ENCODE measurements at regions of chr1 and their contacts with region 1.

Region 1: DNA sequence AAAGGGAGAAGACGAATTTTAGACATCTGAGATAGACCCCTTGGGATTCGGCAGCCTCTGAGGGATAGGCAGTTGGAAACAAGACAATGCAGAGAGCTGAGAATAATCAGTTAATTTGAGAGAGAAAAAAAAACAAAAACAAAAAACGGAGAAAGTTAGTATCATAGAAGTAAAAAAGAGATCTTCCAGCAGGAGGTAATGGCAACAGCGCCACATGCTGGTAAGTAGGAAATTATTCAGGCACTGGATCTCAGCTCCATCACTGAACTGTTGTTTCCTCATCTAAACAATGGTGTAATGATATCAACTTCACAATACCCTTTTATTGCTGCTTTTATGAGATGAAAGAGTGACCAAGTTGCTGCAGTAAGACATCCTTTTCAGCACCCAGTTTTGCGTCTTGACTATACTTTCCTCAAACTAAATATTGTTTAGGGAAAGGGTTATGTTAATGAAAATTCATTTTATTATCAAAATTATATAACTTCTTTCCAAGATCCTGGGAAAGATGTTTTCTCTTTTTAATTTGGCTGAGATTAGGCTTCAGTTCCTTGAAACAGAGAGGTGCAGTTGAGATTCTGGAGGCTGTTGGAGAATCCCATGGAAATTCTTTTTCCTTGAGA is 91.4 kb upstream of the KCNA3 start:
- DNase-seq: peak; percentile 11 to 86 (median 55)
- ATAC-seq: peak; percentile 87
- H3K4me3 ChIP-seq: no peak overlapping the region
- H3K4me3 Mint-ChIP-seq: no peak overlapping the region
- H3K27ac ChIP-seq: no peak overlapping the region
- H3K27ac Mint-ChIP-seq: no peak overlapping the region
- H3K4me1 ChIP-seq: no peaks in the 10 kb centered on the region
- H3K4me1 Mint-ChIP-seq: peaks cover 2% of the 10 kb centered on the region
- H3K27me3 ChIP-seq: no peaks in the 10 kb centered on the region
- H3K27me3 Mint-ChIP-seq: peaks cover 10% of the 10 kb centered on the region
- CTCF ChIP-seq: peak; percentile 95

Region 2: GRCh38 chr1:110554871-110555801 is 211.0 kb before region 1 on chr1:
- CTCF ChIA-PET with region 1: interaction called, 31 read pairs
- POLR2A ChIA-PET with region 1: no interaction called
- intact Hi-C with region 1: loop called (anchors 1 kb)
- DNase-seq: peak; percentile 24 to 75 (median 57)
- ATAC-seq: peak; percentile 97
- H3K4me3 ChIP-seq: peak overlapping the region in 1 of 2 experiments; percentile 23
- H3K4me3 Mint-ChIP-seq: peak overlapping the region; percentile 27
- H3K27ac ChIP-seq: no peak overlapping the region
- H3K27ac Mint-ChIP-seq: no peak overlapping the region
- H3K4me1 ChIP-seq: peaks cover 5% of the 10 kb centered on the region
- H3K4me1 Mint-ChIP-seq: peaks cover 4% of the 10 kb centered on the region
- H3K27me3 ChIP-seq: no peaks in the 10 kb centered on the region
- H3K27me3 Mint-ChIP-seq: peaks cover 44% of the 10 kb centered on the region
- CTCF ChIP-seq: peak; percentile 58

Region 3: DNA sequence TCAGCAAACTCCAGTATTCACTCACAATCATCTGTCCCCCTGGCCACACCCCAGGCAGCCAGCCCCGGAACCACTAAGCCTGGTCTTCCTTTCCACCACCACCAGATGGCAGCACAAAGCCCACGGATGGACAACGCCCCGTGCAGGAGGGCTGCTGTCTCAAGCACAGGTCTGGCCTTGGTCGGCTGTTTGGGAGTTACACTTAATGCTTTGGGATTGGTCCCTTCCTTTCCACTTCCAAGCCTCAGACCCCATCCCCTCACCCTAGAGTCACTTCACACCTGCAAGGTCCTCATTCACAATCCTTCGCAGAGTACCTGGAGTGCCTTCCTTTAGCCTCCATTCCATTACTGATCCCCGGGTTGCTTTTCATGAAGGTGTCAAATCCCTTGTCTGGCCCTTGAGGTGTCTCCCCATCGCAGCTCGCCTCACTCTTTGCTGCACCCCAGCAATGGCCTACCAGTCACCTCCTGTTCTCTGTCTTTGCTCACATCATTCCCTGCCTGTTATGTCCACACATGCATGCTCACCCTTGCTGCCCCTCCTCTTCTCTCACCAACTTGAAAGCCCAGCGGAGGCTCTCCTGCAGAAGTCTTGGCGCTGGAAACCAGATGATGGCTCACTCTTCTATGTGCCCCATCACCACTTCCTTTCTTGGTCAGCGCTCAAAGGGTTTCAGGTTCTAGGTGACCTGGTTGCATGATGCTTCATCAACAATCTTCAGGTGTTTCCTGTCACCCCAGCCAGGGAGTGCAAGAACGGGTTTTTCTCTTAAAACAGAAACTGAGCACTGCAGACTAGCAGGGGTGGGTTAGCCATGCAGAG is 135.1 kb before region 1 on chr1:
- CTCF ChIA-PET with region 1: interaction called, 122 read pairs
- POLR2A ChIA-PET with region 1: interaction called, 3 read pairs
- intact Hi-C with region 1: loop called (anchors 1 kb)
- DNase-seq: peak; percentile 66 to 94 (median 85)
- ATAC-seq: peak; percentile 72
- H3K4me3 ChIP-seq: peak overlapping the region; percentile 27
- H3K4me3 Mint-ChIP-seq: no peak overlapping the region
- H3K27ac ChIP-seq: peak overlapping the region; percentile 28 to 55
- H3K27ac Mint-ChIP-seq: no peak overlapping the region
- H3K4me1 ChIP-seq: peaks cover 55% of the 10 kb centered on the region
- H3K4me1 Mint-ChIP-seq: peaks cover 46% of the 10 kb centered on the region
- H3K27me3 ChIP-seq: no peaks in the 10 kb centered on the region
- H3K27me3 Mint-ChIP-seq: no peaks in the 10 kb centered on the region
- CTCF ChIP-seq: peak; percentile 70

Region 4: GRCh38 chr1:110645821-110646735 is 120.1 kb before region 1 on chr1:
- CTCF ChIA-PET with region 1: interaction called, 10 read pairs
- POLR2A ChIA-PET with region 1: no interaction called
- intact Hi-C with region 1: no loop called
- DNase-seq: peak in 2 of 9 experiments; percentile 27 to 53
- ATAC-seq: peak; percentile 28
- H3K4me3 ChIP-seq: no peak overlapping the region
- H3K4me3 Mint-ChIP-seq: no peak overlapping the region
- H3K27ac ChIP-seq: peak overlapping the region in 1 of 2 experiments; percentile 70
- H3K27ac Mint-ChIP-seq: peak overlapping the region; percentile 28
- H3K4me1 ChIP-seq: peaks cover 77% of the 10 kb centered on the region
- H3K4me1 Mint-ChIP-seq: peaks cover 43% of the 10 kb centered on the region
- H3K27me3 ChIP-seq: no peaks in the 10 kb centered on the region
- H3K27me3 Mint-ChIP-seq: no peaks in the 10 kb centered on the region
- CTCF ChIP-seq: no peak

Region 5: GRCh38 chr1:110734133-110734680 is 31.9 kb before region 1 on chr1:
- CTCF ChIA-PET with region 1: interaction called, 11 read pairs
- POLR2A ChIA-PET with region 1: no interaction called
- intact Hi-C with region 1: no loop called
- DNase-seq: no peak
- ATAC-seq: no peak
- H3K4me3 ChIP-seq: no peak overlapping the region
- H3K4me3 Mint-ChIP-seq: no peak overlapping the region
- H3K27ac ChIP-seq: no peak overlapping the region
- H3K27ac Mint-ChIP-seq: no peak overlapping the region
- H3K4me1 ChIP-seq: no peaks in the 10 kb centered on the region
- H3K4me1 Mint-ChIP-seq: no peaks in the 10 kb centered on the region
- H3K27me3 ChIP-seq: no peaks in the 10 kb centered on the region
- H3K27me3 Mint-ChIP-seq: no peaks in the 10 kb centered on the region
- CTCF ChIP-seq: no peak

Measured in CD8-positive, alpha-beta T cell (primary cell).